Breast epithelium (tissue), 4 donors: ENCODE measurements at regions of chr1 and their contacts with region 1.

Region 1: DNA sequence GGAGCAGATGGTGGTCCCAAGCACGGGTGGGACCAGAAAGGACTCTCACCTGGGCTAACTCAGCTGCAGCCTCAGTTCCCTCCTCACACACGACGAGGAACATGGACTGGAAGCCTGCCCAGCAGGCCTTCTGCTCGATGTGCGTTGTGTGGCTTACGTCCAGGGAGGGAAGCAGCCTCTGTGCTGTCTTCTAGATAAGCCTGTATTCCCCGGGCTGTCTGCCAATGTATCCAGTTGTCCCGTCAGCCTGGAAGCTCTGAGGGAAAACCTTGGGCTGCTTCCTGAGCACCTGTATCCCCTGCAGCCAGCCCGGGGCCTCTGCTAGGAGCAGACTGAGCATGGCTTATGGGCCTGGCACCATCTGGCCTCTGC is 10.5 kb downstream of the PCSK9 start:
- DNase-seq: no peak
- H3K4me3 ChIP-seq: no peak overlapping the region
- H3K27ac ChIP-seq: no peak overlapping the region
- H3K4me1 ChIP-seq: no peaks in the 10 kb centered on the region
- H3K27me3 ChIP-seq: no peaks in the 10 kb centered on the region
- CTCF ChIP-seq: no peak
- POLR2A ChIP-seq: no peak

Region 2: GRCh38 chr1:53614231-53615021 is 1435.5 kb before region 1 on chr1:
- intact Hi-C with region 1: loop called (anchors 5 kb)
- DNase-seq: no peak
- H3K4me3 ChIP-seq: no peak overlapping the region
- H3K27ac ChIP-seq: no peak overlapping the region
- H3K4me1 ChIP-seq: no peaks in the 10 kb centered on the region
- H3K27me3 ChIP-seq: no peaks in the 10 kb centered on the region
- CTCF ChIP-seq: no peak
- POLR2A ChIP-seq: no peak

Region 3: DNA sequence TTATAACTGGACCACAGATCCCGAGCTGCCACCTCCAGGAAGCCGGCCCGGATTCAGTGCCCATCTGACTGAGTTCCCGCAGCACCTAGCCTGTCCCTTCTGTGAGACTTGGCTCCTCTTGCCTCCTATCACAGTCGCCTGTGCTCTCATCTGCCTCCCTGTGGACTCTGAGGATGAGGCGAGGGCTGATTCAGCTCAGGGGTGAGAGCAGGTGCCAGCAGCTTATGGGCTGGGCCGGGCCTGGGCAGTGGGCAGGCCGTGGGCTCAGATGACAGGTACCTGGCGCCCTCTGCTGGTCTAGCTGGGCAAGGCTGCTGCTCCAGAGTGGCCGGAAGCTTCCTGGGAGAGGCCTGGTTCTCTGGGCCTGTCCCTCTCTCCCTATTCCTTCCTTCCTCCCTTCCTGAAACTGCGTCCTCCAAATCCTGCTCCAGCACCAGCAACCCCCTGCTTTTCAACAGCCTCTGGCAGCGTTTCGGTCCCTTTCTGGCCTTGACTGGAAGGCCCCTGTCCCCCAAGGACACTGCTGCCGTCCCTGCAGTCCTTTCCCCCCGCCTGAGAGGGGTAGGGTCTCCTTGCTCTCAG is 27.8 kb before region 1 on chr1:
- intact Hi-C with region 1: no loop called
- DNase-seq: peak; percentile 75 to 88
- H3K4me3 ChIP-seq: no peak overlapping the region
- H3K27ac ChIP-seq: no peak overlapping the region
- H3K4me1 ChIP-seq: no peaks in the 10 kb centered on the region
- H3K27me3 ChIP-seq: no peaks in the 10 kb centered on the region
- CTCF ChIP-seq: peak in 2 of 3 donors; percentile 81 to 90
- POLR2A ChIP-seq: no peak

Region 4: GRCh38 chr1:55039342-55040082 is 10.4 kb before region 1 on chr1 and contains the start of gene PCSK9:
- intact Hi-C with region 1: loop called (anchors 2 kb)
- DNase-seq: no peak
- H3K4me3 ChIP-seq: peak within 1 kb of the TSS; percentile 11 to 59 (median 40)
- H3K27ac ChIP-seq: no peak within 1 kb of the TSS
- H3K4me1 ChIP-seq: no peaks in the 10 kb centered on the region
- H3K27me3 ChIP-seq: peaks cover 0 to 31% of the 10 kb centered on the region in 2 donors
- CTCF ChIP-seq: no peak
- POLR2A ChIP-seq: no peak
- total RNA-seq, gene PCSK9: 0.15 to 0.16 TPM in 2 of 3 donors, not detected in the other

Region 5: DNA sequence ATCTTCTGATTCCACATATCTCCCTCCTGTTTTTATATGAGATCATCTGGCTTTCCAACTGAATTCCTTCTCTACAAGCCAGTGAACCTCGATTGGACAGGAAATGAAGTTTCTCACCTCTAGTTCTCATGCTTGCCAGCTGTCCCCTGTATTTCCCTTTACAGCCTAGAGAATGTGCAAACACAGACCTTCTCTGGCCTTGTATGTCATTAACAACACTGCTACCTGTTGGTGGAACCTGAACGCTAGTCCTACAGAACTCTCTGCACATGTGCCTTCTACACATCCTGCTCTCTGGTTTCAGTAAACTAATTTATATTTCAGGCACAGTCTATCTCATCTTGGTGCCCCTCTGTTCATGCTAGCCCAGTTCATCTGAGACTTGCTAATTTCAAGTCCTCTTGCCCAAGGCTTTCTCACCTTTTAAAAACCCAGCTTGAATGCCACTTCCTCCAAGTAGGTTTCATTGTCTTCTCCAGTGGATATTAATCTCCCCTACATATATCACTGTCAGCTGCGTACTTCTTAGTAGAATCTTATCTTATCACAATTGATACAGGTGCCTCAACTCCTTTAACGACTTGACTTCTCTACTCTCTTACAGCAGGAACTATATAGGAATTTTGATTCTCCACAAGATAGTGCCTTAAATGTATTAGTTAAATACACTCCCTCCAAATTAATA is 979.6 kb after region 1 on chr1:
- intact Hi-C with region 1: loop called (anchors 5 kb)
- DNase-seq: no peak
- H3K4me3 ChIP-seq: no peak overlapping the region
- H3K27ac ChIP-seq: no peak overlapping the region
- H3K4me1 ChIP-seq: no peaks in the 10 kb centered on the region
- H3K27me3 ChIP-seq: no peaks in the 10 kb centered on the region
- CTCF ChIP-seq: no peak
- POLR2A ChIP-seq: no peak